ENCODE measurements at regions of chr3 and their contacts with region 1.

Region 1: GRCh38 chr3:124569761-124570160 is 160.5 kb upstream of the UMPS start:
- DNase-seq: no peak
- H3K4me3 ChIP-seq: no peak overlapping the region
- H3K4me3 Mint-ChIP-seq: no peak overlapping the region
- H3K27ac ChIP-seq: no peak overlapping the region
- H3K27ac Mint-ChIP-seq: no peak overlapping the region
- H3K4me1 ChIP-seq: no peaks in the 10 kb centered on the region
- H3K4me1 Mint-ChIP-seq: no peaks in the 10 kb centered on the region
- H3K27me3 ChIP-seq: no peaks in the 10 kb centered on the region
- H3K27me3 Mint-ChIP-seq: peaks cover 1 to 3% of the 10 kb centered on the region in 2 donors

Region 2: DNA sequence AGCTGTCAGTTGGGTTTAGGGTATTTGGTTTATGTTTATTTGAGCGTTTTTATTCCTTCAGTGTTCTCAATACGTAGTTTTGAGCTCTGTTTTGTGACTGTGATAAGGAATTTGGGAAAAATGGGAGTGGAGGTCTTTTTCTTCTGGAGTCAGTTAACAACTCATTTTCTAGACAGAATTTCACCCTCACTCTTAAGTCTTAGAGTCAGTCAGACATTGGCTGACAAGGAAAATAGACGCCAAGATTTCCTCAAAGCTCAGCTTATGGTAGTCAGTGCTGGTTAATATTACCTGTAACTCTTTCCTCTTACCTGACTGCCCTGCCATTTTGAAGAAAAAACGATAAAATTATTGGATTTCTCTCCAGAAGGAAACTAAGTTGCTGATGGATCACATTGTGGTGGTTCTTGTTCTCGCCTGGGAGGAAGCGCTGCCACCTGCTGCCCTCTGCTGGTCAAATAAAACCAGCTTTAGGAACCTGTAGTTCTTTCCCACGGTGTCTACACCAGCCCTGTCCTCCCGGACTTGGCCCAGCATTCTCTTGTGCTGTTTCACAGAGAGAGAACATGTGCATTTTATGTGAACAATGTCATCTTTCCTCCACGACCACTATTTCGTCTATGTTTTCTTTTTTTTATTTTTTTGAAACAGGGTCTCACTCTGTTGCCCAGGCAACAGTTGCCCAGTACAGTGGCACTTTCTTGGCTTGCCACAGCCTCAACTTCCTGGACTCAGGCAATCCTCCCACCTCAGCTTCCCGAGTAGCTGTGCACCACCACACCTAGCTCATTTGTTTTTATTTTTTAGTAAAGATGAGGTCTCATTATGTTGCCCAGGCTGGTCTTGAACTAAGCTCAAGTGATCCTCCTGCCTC is 119.1 kb after region 1 on chr3:
- CTCF ChIA-PET with region 1: interaction called, 79 read pairs
- POLR2A ChIA-PET with region 1: no interaction called
- DNase-seq: peak; percentile 48 to 71 (median 54)
- H3K4me3 ChIP-seq: no peak overlapping the region
- H3K4me3 Mint-ChIP-seq: no peak overlapping the region
- H3K27ac ChIP-seq: no peak overlapping the region
- H3K27ac Mint-ChIP-seq: no peak overlapping the region
- H3K4me1 ChIP-seq: no peaks in the 10 kb centered on the region
- H3K4me1 Mint-ChIP-seq: peaks cover 2 to 6% (median 5%) of the 10 kb centered on the region in 3 donors
- H3K27me3 ChIP-seq: no peaks in the 10 kb centered on the region
- H3K27me3 Mint-ChIP-seq: peaks cover 15 to 30% of the 10 kb centered on the region in 2 donors

Measured in CD8-positive, alpha-beta memory T cell (primary cell).